Common myeloid progenitor, CD34-positive (primary cell): ENCODE measurements at regions of chr6 and their contacts with region 1.

Region 1: DNA sequence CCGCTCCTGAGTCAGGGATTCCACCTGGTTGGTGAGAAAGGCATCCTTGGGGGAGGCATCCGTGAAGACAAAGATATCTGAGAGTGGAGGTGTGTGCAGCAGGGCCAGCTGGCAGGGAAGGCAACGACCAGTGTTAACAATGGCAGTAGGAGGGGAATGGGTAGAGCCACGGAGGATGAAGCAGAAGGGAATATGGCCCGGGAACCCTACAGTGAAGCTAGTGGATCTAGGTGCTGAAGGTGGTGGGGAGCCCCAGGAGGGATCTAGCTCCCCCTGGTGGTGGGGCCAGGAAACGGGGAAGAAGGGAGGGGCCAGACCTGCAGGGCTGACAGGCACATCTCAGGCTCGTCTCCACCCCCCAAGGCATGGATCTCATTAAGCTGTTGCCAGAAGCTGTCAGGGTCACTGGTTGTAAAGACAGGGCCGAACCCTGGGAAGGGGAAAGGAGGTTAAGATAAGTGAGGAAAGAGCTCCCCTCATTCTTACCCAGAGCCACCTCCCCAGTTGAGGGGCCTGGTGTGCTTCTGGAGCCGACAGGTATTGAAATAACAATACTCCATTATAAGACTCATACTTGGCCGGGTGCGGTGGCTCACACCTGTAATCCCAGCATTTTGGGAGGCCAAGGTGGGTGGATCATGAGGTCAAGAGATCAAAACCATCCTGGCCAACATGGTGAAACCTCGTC is 7.3 kb downstream of the VWA7 start:
- DNase-seq: peak; percentile 84 to 91 (median 86)
- H3K4me3 ChIP-seq: no peak overlapping the region
- H3K27ac ChIP-seq: no peak overlapping the region
- H3K4me1 ChIP-seq: peaks cover 2 to 22% (median 12%) of the 10 kb centered on the region in 4 experiments
- H3K27me3 ChIP-seq: no peaks in the 10 kb centered on the region

Region 2: DNA sequence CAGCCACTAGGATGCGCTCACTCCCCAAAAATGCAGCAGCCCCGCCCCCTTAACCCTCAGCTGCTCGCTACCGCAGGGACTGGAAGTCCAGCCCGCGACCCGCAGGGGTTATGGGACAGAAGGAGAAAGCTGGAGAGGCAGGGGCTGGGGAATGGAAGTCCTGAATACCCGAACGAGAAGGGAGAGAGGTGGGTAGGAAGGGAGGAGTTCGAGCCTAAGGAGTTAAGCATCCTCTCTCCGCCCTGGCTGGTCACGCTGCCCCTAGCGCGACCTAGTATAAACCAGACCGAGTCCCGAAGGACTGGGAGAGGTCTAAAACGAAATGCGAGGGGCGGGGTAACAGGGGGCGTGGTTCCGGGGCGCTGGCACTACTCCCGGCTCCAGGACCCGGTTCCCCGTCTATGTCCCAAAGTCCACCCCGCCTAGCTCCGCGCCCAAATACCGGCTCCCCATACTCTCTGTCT is 40.3 kb before region 1 on chr6:
- CTCF ChIA-PET with region 1: interaction called, 268 read pairs
- POLR2A ChIA-PET with region 1: interaction called, 18 read pairs
- DNase-seq: peak; percentile 88 to 91 (median 91)
- H3K4me3 ChIP-seq: peak overlapping the region; percentile 81 to 100 (median 95)
- H3K27ac ChIP-seq: peak overlapping the region; percentile 62 to 88
- H3K4me1 ChIP-seq: peaks cover 20 to 78% (median 67%) of the 10 kb centered on the region in 4 experiments
- H3K27me3 ChIP-seq: no peaks in the 10 kb centered on the region

Region 3: GRCh38 chr6:31752739-31753319 is 17.0 kb before region 1 on chr6:
- CTCF ChIA-PET with region 1: interaction called, 16 read pairs
- POLR2A ChIA-PET with region 1: no interaction called
- DNase-seq: no peak
- H3K4me3 ChIP-seq: no peak overlapping the region
- H3K27ac ChIP-seq: no peak overlapping the region
- H3K4me1 ChIP-seq: no peaks in the 10 kb centered on the region
- H3K27me3 ChIP-seq: no peaks in the 10 kb centered on the region

Region 4: GRCh38 chr6:31795616-31796298 is 25.9 kb after region 1 on chr6 and contains the start of gene VARS1:
- CTCF ChIA-PET with region 1: interaction called, 13 read pairs
- POLR2A ChIA-PET with region 1: no interaction called
- DNase-seq: peak; percentile 90 to 92 (median 92)
- H3K4me3 ChIP-seq: peak within 1 kb of the TSS; percentile 73 to 98 (median 89)
- H3K27ac ChIP-seq: peak within 1 kb of the TSS; percentile 83 to 92
- H3K4me1 ChIP-seq: peaks cover 14 to 67% (median 51%) of the 10 kb centered on the region in 4 experiments
- H3K27me3 ChIP-seq: no peaks in the 10 kb centered on the region